ENCODE measurements at regions of chr16 and their contacts with region 1.

Region 1: GRCh38 chr16:67104061-67104460 is 5.7 kb upstream of the PHAF1 start:
- DNase-seq: peak in 1 of 2 experiments; percentile 64
- H3K4me3 ChIP-seq: no peak overlapping the region
- H3K27ac ChIP-seq: no peak overlapping the region
- H3K4me1 ChIP-seq: peaks cover 0 to 2% (median under 1%) of the 10 kb centered on the region in 4 experiments; a peak in 3 of 7 replicates
- H3K27me3 ChIP-seq: peaks cover 0 to 4% (median 1%) of the 10 kb centered on the region in 4 experiments; a peak in 2 of 7 replicates
- CTCF ChIP-seq: peak; percentile 64 to 84 (median 64)
- EP300 ChIP-seq: no peak
- POLR2A ChIP-seq: no peak
- RAD21 ChIP-seq: peak; percentile 21 to 40

Region 2: DNA sequence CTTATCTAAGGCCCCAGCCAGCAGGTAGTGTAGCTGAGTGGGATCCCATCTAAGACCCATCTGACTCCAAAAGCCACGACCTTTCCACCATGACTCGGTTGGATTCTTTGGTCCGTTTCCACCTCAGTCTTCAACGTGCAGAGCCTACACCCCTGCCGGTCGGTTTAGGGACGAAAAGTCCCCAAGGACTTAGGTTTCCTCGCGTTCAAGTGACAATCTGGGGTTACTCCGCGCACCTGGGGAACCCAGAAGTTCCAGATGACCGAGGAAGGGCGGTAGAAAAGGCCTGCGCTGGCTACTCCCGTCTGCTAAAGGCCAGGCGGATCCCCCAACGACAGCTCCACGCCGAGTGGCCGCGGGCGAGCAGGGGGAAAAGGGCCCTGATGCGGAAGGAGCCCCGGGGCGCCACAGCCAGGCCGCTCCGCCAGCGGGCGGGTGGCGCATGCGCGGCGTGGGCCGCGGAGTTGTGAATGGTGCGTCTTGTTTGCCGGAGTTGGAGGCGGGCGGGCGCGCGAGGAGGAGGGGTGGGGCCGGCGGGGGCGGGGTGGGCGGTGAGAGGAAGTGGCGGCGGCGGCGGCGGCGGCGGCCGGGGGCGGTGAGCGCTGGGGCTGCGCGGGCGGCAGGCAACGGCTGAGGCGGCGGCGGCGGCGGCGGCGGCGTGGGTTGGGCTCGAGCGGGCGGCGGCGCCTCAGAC is 75.4 kb before region 1 on chr16 and contains the start of gene CBFB:
- CTCF ChIA-PET with region 1: interaction called, 164 read pairs
- POLR2A ChIA-PET with region 1: interaction called, 6 read pairs
- DNase-seq: peak in 1 of 2 experiments; percentile 91
- H3K4me3 ChIP-seq: peak within 1 kb of the TSS; percentile 54 to 88 (median 84)
- H3K27ac ChIP-seq: no peak within 1 kb of the TSS; the same call in 1 of the 2 replicates
- H3K4me1 ChIP-seq: peaks cover 0 to 4% (median 1%) of the 10 kb centered on the region in 4 experiments; a peak in 2 of 7 replicates
- H3K27me3 ChIP-seq: peaks cover 0 to 7% (median 3%) of the 10 kb centered on the region in 4 experiments; a peak in 2 of 7 replicates
- CTCF ChIP-seq: peak in 2 of 3 experiments; percentile 8 to 12; a peak in 1 of 4 replicates
- EP300 ChIP-seq: no peak
- POLR2A ChIP-seq: peak in 1 of 2 experiments; percentile 35; a peak in 1 of 3 replicates
- RAD21 ChIP-seq: no peak
- total RNA-seq, gene CBFB: 31.6 and 34.3 TPM in 2 replicates

Region 3: DNA sequence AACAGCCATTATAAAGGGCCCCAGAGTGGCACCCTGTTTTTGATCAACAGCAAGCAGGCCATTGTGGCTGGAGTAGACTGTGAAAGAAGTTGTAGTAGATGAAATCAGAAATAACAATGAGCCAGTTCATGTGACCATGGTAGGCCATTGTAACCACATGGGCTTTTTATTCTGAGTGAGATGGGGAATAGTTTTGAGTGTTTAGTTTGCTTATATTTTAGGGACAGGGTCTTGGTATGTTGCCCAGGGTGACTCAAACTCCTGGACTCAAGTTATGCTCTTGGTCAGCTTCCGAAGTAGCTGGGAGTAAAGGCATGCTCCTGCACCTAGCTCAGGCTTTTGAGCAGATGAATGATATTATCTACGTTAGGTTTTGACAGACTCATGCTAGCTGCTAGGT is 63.2 kb before region 1 on chr16:
- CTCF ChIA-PET with region 1: interaction called, 14 read pairs
- POLR2A ChIA-PET with region 1: no interaction called
- DNase-seq: no peak
- H3K4me3 ChIP-seq: no peak overlapping the region
- H3K27ac ChIP-seq: no peak overlapping the region
- H3K4me1 ChIP-seq: no peaks in the 10 kb centered on the region; a peak in 1 of 7 replicates
- H3K27me3 ChIP-seq: no peaks in the 10 kb centered on the region
- CTCF ChIP-seq: no peak
- EP300 ChIP-seq: no peak
- POLR2A ChIP-seq: no peak
- RAD21 ChIP-seq: no peak

Region 4: DNA sequence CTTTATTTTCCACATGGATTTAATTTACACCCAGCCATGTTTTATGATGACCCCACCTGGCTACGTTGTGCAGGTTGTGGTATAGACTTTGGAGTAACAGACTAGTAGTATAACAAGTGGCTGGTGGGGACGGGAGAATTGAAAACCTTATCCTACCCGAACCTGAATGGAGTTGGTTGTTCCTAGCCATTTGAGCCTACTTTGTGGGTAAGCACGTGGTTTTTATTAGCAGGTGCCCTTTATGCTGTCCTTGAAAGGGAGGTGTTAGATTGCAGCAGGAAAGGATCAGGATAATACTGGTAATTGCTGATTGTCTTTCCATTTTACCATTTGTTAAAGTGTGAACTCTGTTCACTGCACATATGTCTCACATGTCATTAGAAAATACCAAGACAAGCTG is 26.2 kb before region 1 on chr16:
- CTCF ChIA-PET with region 1: interaction called, 12 read pairs
- POLR2A ChIA-PET with region 1: interaction called, 4 read pairs
- DNase-seq: no peak
- H3K4me3 ChIP-seq: no peak overlapping the region
- H3K27ac ChIP-seq: no peak overlapping the region
- H3K4me1 ChIP-seq: no peaks in the 10 kb centered on the region
- H3K27me3 ChIP-seq: no peaks in the 10 kb centered on the region
- CTCF ChIP-seq: no peak
- EP300 ChIP-seq: no peak
- POLR2A ChIP-seq: no peak
- RAD21 ChIP-seq: no peak

Region 5: GRCh38 chr16:67115639-67116038 is 11.6 kb after region 1 on chr16:
- CTCF ChIA-PET with region 1: interaction called, 22 read pairs
- POLR2A ChIA-PET with region 1: interaction called, 3 read pairs
- DNase-seq: no peak
- H3K4me3 ChIP-seq: no peak overlapping the region
- H3K27ac ChIP-seq: no peak overlapping the region
- H3K4me1 ChIP-seq: 0 out of 7 replicates have a peak, but pooled peaks cover 0 to 2% (median 0%) of the 10 kb centered on the region in 4 experiments
- H3K27me3 ChIP-seq: no peaks in the 10 kb centered on the region
- CTCF ChIP-seq: no peak
- EP300 ChIP-seq: no peak
- POLR2A ChIP-seq: no peak
- RAD21 ChIP-seq: no peak

Region 6: GRCh38 chr16:67173808-67174705 is 70.0 kb after region 1 on chr16:
- CTCF ChIA-PET with region 1: interaction called, 13 read pairs
- POLR2A ChIA-PET with region 1: no interaction called
- DNase-seq: peak in 1 of 2 experiments; percentile 78
- H3K4me3 ChIP-seq: peak overlapping the region; percentile 27 to 57 (median 34)
- H3K27ac ChIP-seq: no peak overlapping the region
- H3K4me1 ChIP-seq: peaks cover 0 to 40% (median 30%) of the 10 kb centered on the region in 4 experiments; a peak in 6 of 7 replicates
- H3K27me3 ChIP-seq: peaks cover 50 to 90% (median 86%) of the 10 kb centered on the region in 4 experiments
- CTCF ChIP-seq: peak in 2 of 3 experiments; percentile 14 to 15; a peak in 2 of 4 replicates
- EP300 ChIP-seq: no peak
- POLR2A ChIP-seq: no peak
- RAD21 ChIP-seq: peak; percentile 7 to 23; a peak in 2 of 4 replicates

Measured in H1 (cell line).